ENCODE measurements at regions of chr11 and their contacts with region 1.

Region 1: DNA sequence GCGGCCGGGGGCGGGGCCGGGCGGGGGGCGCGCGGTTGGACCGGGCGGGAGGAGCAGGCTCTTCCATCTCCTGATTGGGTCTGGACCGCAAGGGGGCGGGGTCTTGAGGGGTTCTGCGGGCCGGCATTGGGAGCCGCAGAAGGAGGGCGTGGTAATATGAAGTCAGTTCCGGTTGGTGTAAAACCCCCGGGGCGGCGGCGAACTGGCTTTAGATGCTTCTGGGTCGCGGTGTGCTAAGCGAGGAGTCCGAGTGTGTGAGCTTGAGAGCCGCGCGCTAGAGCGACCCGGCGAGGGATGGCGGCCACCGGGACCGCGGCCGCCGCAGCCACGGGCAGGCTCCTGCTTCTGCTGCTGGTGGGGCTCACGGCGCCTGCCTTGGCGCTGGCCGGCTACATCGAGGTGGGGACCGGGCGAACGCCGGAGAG is at the start of gene APLP2:
- DNase-seq: peak; percentile 96 to 100 (median 99)

Region 2: DNA sequence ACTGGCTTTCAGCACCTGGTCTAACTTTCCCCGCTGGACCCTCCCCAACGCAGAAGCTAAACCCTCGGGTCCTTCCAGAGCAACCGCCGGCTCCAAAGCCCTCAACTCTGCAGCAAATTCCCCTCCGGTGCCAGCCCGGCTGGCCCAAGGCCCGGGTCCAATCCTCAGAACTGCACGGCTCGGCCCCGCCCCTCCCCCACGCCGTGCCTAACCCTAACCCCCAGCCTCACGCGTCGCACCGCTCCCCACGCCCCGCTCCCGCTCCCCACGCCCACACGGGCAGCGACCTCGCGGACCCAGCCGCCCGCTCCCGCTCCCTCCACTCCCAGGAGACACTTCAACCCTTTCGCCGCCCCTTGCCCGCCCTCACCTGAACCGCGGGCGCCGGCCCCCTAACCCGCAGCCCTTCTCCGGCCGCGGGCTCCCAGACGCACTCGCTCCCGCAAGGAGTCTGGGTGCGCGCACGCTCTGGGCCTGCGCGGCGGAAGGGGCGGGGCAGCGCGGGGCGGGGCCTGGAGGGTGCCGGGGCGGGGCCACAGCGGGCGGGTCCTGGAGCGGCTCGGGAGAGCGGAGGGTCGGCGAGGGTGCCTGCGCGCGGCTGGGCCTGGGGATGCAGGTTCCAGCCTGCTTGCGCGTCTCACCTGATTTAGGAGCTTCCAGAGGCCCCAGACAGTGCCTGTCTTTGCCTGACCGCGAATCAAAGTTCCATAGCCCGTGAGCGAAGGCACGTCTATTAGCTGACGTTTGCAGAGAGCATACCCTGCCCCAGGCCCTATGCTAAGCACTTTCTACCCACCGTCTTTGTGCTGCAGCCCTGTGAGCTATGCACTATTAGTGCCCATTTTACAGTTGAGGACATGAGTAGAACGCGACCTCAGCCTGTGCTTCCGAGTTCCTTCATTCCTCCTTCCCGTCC is 174.3 kb before region 1 on chr11 and contains the start of gene NFRKB:
- intact Hi-C with region 1: loop called (anchors 10 kb)
- DNase-seq: peak; percentile 58 to 95 (median 90)

Region 3: GRCh38 chr11:130002846-130003716 is 66.6 kb before region 1 on chr11:
- intact Hi-C with region 1: loop called (anchors 2 kb)
- DNase-seq: peak; percentile 89 to 98 (median 96)

Region 4: DNA sequence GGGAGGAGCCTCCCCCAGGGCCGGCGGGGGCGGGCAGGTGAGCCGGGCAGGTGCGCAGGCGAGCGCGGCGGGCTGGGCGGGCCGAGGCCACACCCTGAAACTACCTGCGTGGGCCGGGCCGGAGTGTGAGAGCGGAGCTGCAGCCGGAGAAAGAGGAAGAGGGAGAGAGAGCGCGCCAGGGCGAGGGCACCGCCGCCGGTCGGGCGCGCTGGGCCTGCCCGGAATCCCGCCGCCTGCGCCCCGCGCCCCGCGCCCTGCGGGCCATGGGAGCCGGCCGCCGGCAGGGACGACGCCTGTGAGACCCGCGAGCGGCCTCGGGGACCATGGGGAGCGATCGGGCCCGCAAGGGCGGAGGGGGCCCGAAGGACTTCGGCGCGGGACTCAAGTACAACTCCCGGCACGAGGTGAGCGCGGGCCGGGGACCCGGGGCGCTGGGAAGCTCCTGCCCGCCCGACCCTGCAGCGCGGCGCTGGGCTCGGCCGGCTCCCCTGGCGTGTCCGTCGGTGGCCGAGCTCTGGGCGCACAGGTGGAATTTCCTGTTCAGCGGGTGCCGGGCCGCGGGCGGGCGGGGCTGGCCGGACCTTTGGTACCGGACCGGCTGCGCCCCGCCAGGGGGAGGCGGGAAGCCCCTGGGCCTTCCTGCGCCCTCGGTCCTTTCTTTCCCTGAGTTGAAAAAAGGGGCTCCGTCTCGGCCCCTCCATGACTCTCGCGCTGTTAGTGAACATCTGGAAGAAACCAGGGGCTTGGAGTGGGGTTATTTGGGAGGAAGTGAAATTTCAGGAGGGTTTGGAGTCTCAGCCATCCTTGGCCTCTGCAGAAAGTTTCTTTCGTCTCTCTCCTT is 90.2 kb after region 1 on chr11 and contains the start of gene ST14:
- intact Hi-C with region 1: no loop called
- DNase-seq: no peak

Measured in head of caudate nucleus (tissue), 42 donors.